OCI-LY7 (cell line): ENCODE measurements at regions of chr1 and their contacts with region 1.

Region 1: DNA sequence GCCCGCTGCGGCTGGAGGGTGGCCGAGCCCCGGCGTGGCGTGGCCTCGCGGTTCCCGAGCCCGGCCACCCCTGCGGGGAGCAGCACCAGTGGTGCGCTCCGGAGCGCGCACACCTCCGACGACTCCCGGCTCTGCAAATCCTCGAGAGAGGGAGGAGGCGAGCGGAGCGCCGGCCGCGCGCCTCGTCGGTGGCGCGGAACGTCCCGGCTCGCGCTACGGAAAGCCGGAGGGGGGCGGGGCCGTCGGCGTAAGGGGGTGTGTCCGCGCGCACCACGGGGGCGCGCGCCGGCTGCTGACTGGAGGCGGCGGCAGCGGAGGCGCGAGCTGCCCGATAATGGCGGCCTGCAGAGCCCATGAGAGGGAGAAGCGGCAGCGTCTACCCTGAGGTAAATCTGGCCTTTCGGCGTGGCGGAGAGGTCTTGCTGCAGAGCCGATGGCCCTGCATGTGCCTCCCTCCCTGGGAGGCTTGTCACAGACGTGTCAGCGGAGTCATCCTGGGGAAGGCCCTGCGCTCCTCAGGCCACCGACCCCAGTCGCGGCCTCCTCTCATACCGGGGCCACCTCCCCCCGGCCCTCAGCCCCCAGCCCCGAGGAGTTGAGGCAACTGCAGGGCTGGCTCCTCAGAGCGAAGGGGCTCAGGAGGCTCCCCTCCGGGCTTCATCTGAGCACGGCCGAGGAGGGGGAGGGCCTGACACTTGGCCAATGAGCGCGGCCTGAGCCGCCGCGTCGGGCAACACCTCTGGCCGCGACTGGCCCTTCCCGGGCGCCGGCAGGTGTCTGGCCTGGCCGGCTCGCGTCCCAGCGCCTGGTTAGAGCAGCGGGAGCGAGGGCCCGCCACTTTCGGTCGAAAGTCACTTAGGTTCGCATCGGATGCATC is at the start of gene PDIK1L:
- DNase-seq: peak; percentile 98
- H3K4me3 ChIP-seq: peak within 1 kb of the TSS; percentile 87
- H3K27ac ChIP-seq: peak within 1 kb of the TSS; percentile 68
- H3K4me1 ChIP-seq: peaks cover 36% of the 10 kb centered on the region
- CTCF ChIP-seq: no peak
- total RNA-seq, gene PDIK1L: 10.4 and 12.9 TPM in 2 replicates

Region 2: GRCh38 chr1:26094677-26095383 is 16.9 kb before region 1 on chr1:
- CTCF ChIA-PET with region 1: no interaction called
- POLR2A ChIA-PET with region 1: no interaction called
- intact Hi-C with region 1: no loop called
- DNase-seq: no peak
- H3K4me3 ChIP-seq: no peak overlapping the region
- H3K27ac ChIP-seq: no peak overlapping the region
- H3K4me1 ChIP-seq: no peaks in the 10 kb centered on the region
- CTCF ChIP-seq: no peak

Region 3: DNA sequence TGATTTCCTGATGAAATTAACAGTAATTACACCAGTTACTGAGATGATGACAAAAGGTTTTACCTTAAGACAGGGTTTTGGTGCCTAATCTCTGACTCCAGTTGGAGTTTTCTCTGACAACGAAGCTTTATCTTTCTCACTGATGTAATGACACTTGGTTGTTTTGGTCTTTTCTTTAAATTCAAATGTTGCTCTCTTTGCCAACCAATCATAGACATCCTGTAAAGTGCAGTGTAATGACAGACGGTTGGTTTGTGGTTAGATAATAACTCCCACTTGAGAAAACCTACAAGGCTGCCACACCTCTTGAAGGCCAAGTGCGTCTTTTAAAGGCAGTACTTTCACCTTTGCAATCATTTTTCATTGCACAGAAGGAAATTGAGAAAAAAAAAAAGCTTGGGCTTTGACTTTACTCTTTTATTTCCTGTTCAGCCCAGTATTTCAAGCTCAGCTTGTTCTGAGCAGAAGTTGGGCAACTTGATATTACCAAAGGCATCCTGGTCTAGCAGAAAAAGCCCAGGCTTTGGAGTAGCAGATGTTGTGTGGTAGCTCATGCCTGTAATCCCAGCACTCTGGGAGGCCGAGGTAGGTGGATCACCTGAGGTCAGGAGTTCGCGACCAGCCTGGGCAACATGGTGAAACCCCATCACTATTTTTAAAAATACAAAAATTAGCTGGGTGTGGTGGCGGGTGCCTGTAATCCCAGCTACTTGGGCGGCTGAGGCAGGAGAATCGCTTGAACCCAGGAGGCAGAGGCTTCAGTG is 14.7 kb after region 1 on chr1:
- CTCF ChIA-PET with region 1: no interaction called
- POLR2A ChIA-PET with region 1: interaction called, 12 read pairs
- intact Hi-C with region 1: no loop called
- DNase-seq: peak; percentile 79
- H3K4me3 ChIP-seq: peak overlapping the region; percentile 38
- H3K27ac ChIP-seq: peak overlapping the region; percentile 78
- H3K4me1 ChIP-seq: peaks cover 32% of the 10 kb centered on the region
- CTCF ChIP-seq: no peak

Region 4: DNA sequence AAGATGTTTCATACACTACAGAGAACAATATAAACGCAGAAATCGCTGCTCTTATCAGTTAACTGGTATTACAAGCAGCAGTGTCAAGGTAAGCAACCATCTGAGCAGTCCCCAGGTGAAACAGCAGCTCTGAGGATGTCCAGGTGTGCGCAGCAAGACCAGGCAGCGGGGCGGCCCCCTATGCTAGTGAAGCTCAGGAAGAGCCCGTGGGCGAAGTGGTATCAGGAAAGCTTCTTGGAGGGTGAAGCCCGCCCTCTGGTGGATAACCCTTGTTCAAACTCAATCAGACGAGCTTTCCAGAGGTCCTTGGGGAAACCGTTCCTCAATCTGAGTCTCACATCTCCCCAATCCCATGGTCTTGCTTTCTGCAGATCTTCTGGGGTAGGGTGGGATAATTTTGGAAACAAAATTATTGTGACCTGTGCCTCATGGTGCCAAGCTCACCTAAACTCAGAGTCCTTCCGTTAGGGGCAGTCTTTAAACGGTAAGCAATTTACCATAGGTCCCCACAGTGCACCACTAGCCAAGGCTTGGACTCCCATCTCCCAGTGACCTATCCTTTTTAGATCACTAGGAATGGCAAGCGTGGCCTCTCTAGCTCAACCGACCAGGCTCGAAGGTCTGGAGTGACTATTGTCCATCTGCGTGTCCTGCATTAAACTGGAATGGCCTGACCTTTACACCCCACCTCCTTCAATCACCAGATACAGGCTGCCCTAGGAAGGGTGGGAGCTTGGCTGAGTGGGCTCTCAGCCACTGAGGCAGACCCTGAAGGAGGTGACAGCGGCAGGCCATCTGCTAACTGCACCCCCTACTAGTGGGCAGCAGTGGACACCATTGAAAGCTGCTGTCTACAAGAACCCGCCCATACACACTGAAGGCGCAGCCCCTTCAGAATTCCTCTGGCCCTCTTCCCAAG is 33.5 kb after region 1 on chr1:
- CTCF ChIA-PET with region 1: interaction called, 5 read pairs
- POLR2A ChIA-PET with region 1: interaction called, 10 read pairs
- intact Hi-C with region 1: no loop called
- DNase-seq: peak; percentile 83
- H3K4me3 ChIP-seq: no peak overlapping the region
- H3K27ac ChIP-seq: no peak overlapping the region
- H3K4me1 ChIP-seq: no peaks in the 10 kb centered on the region
- CTCF ChIP-seq: peak; percentile 86

Region 5: GRCh38 chr1:26169669-26170471 is 58.1 kb after region 1 on chr1 and contains the start of gene ZNF593:
- CTCF ChIA-PET with region 1: no interaction called
- POLR2A ChIA-PET with region 1: interaction called, 3 read pairs
- intact Hi-C with region 1: loop called (anchors 1 kb)
- DNase-seq: peak; percentile 96
- H3K4me3 ChIP-seq: peak within 1 kb of the TSS; percentile 81
- H3K27ac ChIP-seq: peak within 1 kb of the TSS; percentile 24
- H3K4me1 ChIP-seq: peaks cover 9% of the 10 kb centered on the region
- CTCF ChIP-seq: peak; percentile 84
- total RNA-seq, gene ZNF593: 60.0 and 63.6 TPM in 2 replicates

Region 6: GRCh38 chr1:26233903-26234643 is 122.3 kb after region 1 on chr1 and contains the start of gene CEP85:
- CTCF ChIA-PET with region 1: interaction called, 5 read pairs
- POLR2A ChIA-PET with region 1: no interaction called
- intact Hi-C with region 1: loop called (anchors 2 kb)
- DNase-seq: peak; percentile 98
- H3K4me3 ChIP-seq: peak within 1 kb of the TSS; percentile 86
- H3K27ac ChIP-seq: peak within 1 kb of the TSS; percentile 67
- H3K4me1 ChIP-seq: peaks cover 34% of the 10 kb centered on the region
- CTCF ChIP-seq: peak; percentile 87
- total RNA-seq, gene CEP85: 46.4 and 55.2 TPM in 2 replicates

Region 7: GRCh38 chr1:26336477-26337205 is 224.9 kb after region 1 on chr1:
- CTCF ChIA-PET with region 1: no interaction called
- POLR2A ChIA-PET with region 1: interaction called, 3 read pairs
- intact Hi-C with region 1: loop called (anchors 5 kb)
- DNase-seq: peak; percentile 83
- H3K4me3 ChIP-seq: peak overlapping the region; percentile 69
- H3K27ac ChIP-seq: no peak overlapping the region
- H3K4me1 ChIP-seq: peaks cover 30% of the 10 kb centered on the region
- CTCF ChIP-seq: no peak